GM12878 (cell line): ENCODE measurements at regions of chr6 and their contacts with region 1.

Region 1: GRCh38 chr6:30686908-30687658 is 638 bp upstream of the PPP1R18 start:
- DNase-seq: peak; percentile 94
- ATAC-seq: peak; percentile 64
- H3K4me3 ChIP-seq: peak overlapping the region; percentile 100
- H3K27ac ChIP-seq: peak overlapping the region; percentile 96
- H3K4me1 ChIP-seq: peaks cover 15% of the 10 kb centered on the region
- H3K27me3 ChIP-seq: no peaks in the 10 kb centered on the region
- CTCF ChIP-seq: no peak
- EP300 ChIP-seq: peak; percentile 60 to 91
- POLR2A ChIP-seq: peak; percentile 62
- RAD21 ChIP-seq: no peak

Region 2: GRCh38 chr6:30238174-30238795 is 448.8 kb before region 1 on chr6:
- CTCF ChIA-PET with region 1: no interaction called
- POLR2A ChIA-PET with region 1: no interaction called
- RAD21 ChIA-PET with region 1: no interaction called
- SMC1A ChIA-PET with region 1: no interaction called
- in situ Hi-C with region 1: no loop called
- intact Hi-C with region 1: no loop called
- DNase-seq: no peak
- ATAC-seq: peak; percentile 82
- H3K4me3 ChIP-seq: no peak overlapping the region
- H3K27ac ChIP-seq: no peak overlapping the region
- H3K4me1 ChIP-seq: no peaks in the 10 kb centered on the region
- H3K27me3 ChIP-seq: no peaks in the 10 kb centered on the region; a peak in 1 of 4 replicates
- CTCF ChIP-seq: peak; percentile 52 to 76 (median 60)
- EP300 ChIP-seq: no peak
- POLR2A ChIP-seq: no peak
- RAD21 ChIP-seq: peak; percentile 77

Region 3: DNA sequence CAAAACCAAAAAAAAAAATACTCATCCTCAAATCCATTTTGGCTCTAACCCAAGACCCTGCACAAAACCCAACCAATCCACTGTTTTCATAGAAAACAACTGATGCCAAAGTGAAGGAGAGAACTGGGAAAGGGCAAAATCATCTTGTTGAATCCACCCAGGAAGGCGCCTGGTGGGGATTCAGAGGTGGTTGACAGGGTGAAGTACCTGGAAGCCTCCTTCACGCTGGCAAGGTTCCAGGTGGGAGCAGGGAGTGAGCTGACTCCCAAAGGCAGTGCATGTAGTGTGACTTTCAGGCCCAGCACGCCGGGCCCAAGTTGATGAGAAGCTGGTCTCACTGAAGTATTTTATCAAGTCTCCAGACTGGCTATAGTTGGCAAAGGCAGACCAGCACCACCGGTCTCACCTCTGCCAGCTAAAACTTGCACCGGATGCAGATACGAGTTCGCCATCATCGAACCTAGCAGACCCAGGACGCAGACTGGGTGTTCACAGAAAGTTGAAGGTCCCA is 86.6 kb before region 1 on chr6:
- CTCF ChIA-PET with region 1: no interaction called
- POLR2A ChIA-PET with region 1: no interaction called
- RAD21 ChIA-PET with region 1: no interaction called
- SMC1A ChIA-PET with region 1: no interaction called
- in situ Hi-C with region 1: no loop called
- intact Hi-C with region 1: no loop called
- DNase-seq: no peak
- ATAC-seq: no peak
- H3K4me3 ChIP-seq: no peak overlapping the region
- H3K27ac ChIP-seq: no peak overlapping the region
- H3K4me1 ChIP-seq: no peaks in the 10 kb centered on the region; the same call in 1 of the 2 replicates
- H3K27me3 ChIP-seq: no peaks in the 10 kb centered on the region
- CTCF ChIP-seq: no peak
- EP300 ChIP-seq: no peak
- POLR2A ChIP-seq: peak; percentile 47; the same call in 1 of the 2 replicates
- RAD21 ChIP-seq: no peak

Region 4: GRCh38 chr6:30616811-30617564 is 70.1 kb before region 1 on chr6 and contains the start of gene PPP1R10:
- CTCF ChIA-PET with region 1: interaction called, 3 read pairs
- POLR2A ChIA-PET with region 1: interaction called, 16 read pairs
- RAD21 ChIA-PET with region 1: interaction called, 3 read pairs
- SMC1A ChIA-PET with region 1: interaction called, 6 read pairs
- in situ Hi-C with region 1: no loop called
- intact Hi-C with region 1: no loop called
- DNase-seq: peak; percentile 100
- ATAC-seq: peak; percentile 81
- H3K4me3 ChIP-seq: peak within 1 kb of the TSS; percentile 80
- H3K27ac ChIP-seq: peak within 1 kb of the TSS; percentile 99
- H3K4me1 ChIP-seq: peaks cover 3% of the 10 kb centered on the region
- H3K27me3 ChIP-seq: no peaks in the 10 kb centered on the region
- CTCF ChIP-seq: no peak
- EP300 ChIP-seq: no peak; a peak in 1 of 4 replicates
- POLR2A ChIP-seq: peak; percentile 97
- RAD21 ChIP-seq: no peak
- polyA plus RNA-seq, gene PPP1R10: 11.3 to 22.6 TPM

Region 5: GRCh38 chr6:30672445-30673253 is 14.4 kb before region 1 on chr6 and contains the start of gene DHX16:
- CTCF ChIA-PET with region 1: interaction called, 14 read pairs
- POLR2A ChIA-PET with region 1: interaction called, 16 read pairs
- RAD21 ChIA-PET with region 1: interaction called, 4 read pairs
- SMC1A ChIA-PET with region 1: interaction called, 6 read pairs
- in situ Hi-C with region 1: no loop called
- intact Hi-C with region 1: no loop called
- DNase-seq: peak; percentile 90
- ATAC-seq: peak; percentile 90
- H3K4me3 ChIP-seq: peak within 1 kb of the TSS; percentile 99
- H3K27ac ChIP-seq: peak within 1 kb of the TSS; percentile 79
- H3K4me1 ChIP-seq: peaks cover 8% of the 10 kb centered on the region
- H3K27me3 ChIP-seq: no peaks in the 10 kb centered on the region
- CTCF ChIP-seq: peak; percentile 77 to 93 (median 88); a peak in 5 of 6 replicates
- EP300 ChIP-seq: no peak
- POLR2A ChIP-seq: peak; percentile 70
- RAD21 ChIP-seq: peak; percentile 64
- polyA plus RNA-seq, gene DHX16: 10.1 to 17.7 TPM

Region 6: GRCh38 chr6:30711758-30712380 is 24.8 kb after region 1 on chr6:
- CTCF ChIA-PET with region 1: interaction called, 487 read pairs
- POLR2A ChIA-PET with region 1: interaction called, 200 read pairs
- RAD21 ChIA-PET with region 1: interaction called, 209 read pairs
- SMC1A ChIA-PET with region 1: interaction called, 265 read pairs
- in situ Hi-C with region 1: loop called (anchors 5 kb)
- intact Hi-C with region 1: loop called (anchors 1 kb)
- DNase-seq: no peak
- ATAC-seq: peak; percentile 79
- H3K4me3 ChIP-seq: peak overlapping the region; percentile 0; the same call in 1 of the 2 replicates
- H3K27ac ChIP-seq: peak overlapping the region; percentile 35
- H3K4me1 ChIP-seq: peaks cover 32% of the 10 kb centered on the region
- H3K27me3 ChIP-seq: no peaks in the 10 kb centered on the region
- CTCF ChIP-seq: 0 out of 6 replicates have a peak, but pooled peaks of 1 of the 3 experiments have one; percentile 9
- EP300 ChIP-seq: no peak
- POLR2A ChIP-seq: no peak
- RAD21 ChIP-seq: no peak

Region 7: GRCh38 chr6:30717042-30717844 is 30.2 kb after region 1 on chr6 and contains the start of gene MDC1:
- CTCF ChIA-PET with region 1: interaction called, 487 read pairs
- POLR2A ChIA-PET with region 1: interaction called, 200 read pairs
- RAD21 ChIA-PET with region 1: interaction called, 209 read pairs
- SMC1A ChIA-PET with region 1: interaction called, 265 read pairs
- in situ Hi-C with region 1: loop called (anchors 5 kb)
- intact Hi-C with region 1: loop called (anchors 1 kb)
- DNase-seq: peak; percentile 99
- ATAC-seq: peak; percentile 76
- H3K4me3 ChIP-seq: peak within 1 kb of the TSS; percentile 83
- H3K27ac ChIP-seq: peak within 1 kb of the TSS; percentile 98
- H3K4me1 ChIP-seq: peaks cover 16% of the 10 kb centered on the region
- H3K27me3 ChIP-seq: no peaks in the 10 kb centered on the region
- CTCF ChIP-seq: peak; percentile 8 to 29 (median 17); a peak in 3 of 6 replicates
- EP300 ChIP-seq: peak; percentile 39 to 52; a peak in 1 of 4 replicates
- POLR2A ChIP-seq: peak; percentile 80
- RAD21 ChIP-seq: no peak; the same call in 1 of the 2 replicates
- polyA plus RNA-seq, gene MDC1: 5.1 to 6.5 TPM

Region 8: DNA sequence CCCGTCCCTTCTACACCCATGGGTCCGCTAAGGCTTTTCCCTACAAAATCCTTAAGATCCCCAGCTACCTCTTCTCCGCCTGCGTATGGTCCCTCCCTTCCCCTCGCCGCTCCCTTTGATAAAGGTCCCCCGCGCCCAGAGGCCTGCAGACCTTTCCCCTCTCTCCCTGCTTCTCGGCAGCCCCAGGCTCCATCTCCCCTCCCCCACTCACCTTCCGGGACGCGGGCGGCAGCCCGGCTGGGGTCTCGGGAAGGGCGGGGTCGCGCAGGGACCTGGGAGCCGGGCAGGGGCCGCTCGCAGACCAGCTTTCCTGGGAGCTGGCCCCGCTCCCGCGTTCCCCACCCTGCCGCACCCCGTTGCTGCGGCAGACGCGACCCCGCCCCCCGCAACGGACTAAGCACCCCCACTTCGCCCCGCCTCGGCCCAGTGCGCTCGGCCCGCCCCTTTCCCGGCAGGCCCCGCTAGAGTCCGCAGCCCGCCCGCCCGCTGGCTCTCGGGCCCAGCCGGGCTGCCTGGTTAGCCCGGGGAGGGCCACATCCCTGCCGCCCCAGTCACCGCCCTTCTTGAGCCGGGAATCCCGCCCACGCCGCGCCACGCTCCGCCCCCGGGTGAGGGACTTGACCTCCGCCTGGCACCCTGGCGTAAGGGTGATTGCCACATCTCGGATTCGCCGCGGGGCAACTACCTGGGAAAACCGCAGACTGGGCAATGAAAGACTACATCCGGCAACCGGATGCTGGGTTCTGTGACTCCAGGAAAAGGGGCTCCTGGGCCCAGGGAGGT is 55.4 kb after region 1 on chr6 and contains the start of gene FLOT1:
- CTCF ChIA-PET with region 1: no interaction called
- POLR2A ChIA-PET with region 1: interaction called, 27 read pairs
- RAD21 ChIA-PET with region 1: interaction called, 232 read pairs
- SMC1A ChIA-PET with region 1: interaction called, 11 read pairs
- in situ Hi-C with region 1: no loop called
- intact Hi-C with region 1: no loop called
- DNase-seq: peak; percentile 80
- ATAC-seq: peak; percentile 80
- H3K4me3 ChIP-seq: peak within 1 kb of the TSS; percentile 95
- H3K27ac ChIP-seq: peak within 1 kb of the TSS; percentile 72
- H3K4me1 ChIP-seq: peaks cover 23% of the 10 kb centered on the region
- H3K27me3 ChIP-seq: no peaks in the 10 kb centered on the region
- CTCF ChIP-seq: no peak
- EP300 ChIP-seq: peak in 1 of 2 experiments; percentile 12; a peak in 1 of 4 replicates
- POLR2A ChIP-seq: peak; percentile 83
- RAD21 ChIP-seq: no peak
- polyA plus RNA-seq, gene FLOT1: 12.3 to 16.8 TPM

Region 9: DNA sequence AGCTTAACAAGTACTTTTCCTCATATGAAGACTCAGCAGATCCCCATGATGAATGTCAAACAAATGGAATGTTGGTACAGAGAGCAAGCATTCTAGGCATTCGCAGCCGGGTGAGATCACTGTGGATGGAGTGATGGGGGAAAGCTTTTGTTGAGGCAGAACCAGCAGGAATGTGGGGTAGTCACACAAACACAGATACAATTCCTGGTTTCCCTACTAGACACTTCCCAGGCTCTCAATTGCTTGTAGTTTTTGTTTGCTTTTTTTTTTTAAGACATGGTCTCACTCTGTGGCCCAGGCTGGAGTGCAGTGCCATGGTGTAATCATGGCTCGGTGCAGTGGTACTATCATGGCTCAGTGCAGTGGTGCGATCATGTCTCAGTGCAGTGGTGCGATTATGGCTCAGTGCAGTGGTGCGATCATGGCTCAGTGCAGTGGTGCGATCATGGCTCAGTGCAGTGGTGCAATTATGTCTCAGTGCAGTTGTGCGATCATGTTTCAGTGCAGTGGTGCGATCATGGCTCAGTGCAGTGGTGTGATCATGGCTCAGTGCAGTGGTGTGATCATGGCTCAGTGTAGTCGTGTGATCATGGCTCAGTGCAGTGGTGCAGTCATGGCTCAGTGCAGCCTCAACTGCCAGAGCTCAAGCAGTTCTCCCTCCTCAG is 72.6 kb after region 1 on chr6:
- CTCF ChIA-PET with region 1: no interaction called
- POLR2A ChIA-PET with region 1: interaction called, 5 read pairs
- RAD21 ChIA-PET with region 1: interaction called, 4 read pairs
- SMC1A ChIA-PET with region 1: no interaction called
- in situ Hi-C with region 1: no loop called
- intact Hi-C with region 1: loop called (anchors 2 kb)
- DNase-seq: no peak
- ATAC-seq: no peak
- H3K4me3 ChIP-seq: no peak overlapping the region
- H3K27ac ChIP-seq: peak overlapping the region; percentile 35; the same call in 1 of the 2 replicates
- H3K4me1 ChIP-seq: peaks cover 22% of the 10 kb centered on the region; the same call in 1 of the 2 replicates
- H3K27me3 ChIP-seq: no peaks in the 10 kb centered on the region
- CTCF ChIP-seq: no peak
- EP300 ChIP-seq: no peak
- POLR2A ChIP-seq: no peak
- RAD21 ChIP-seq: no peak